K562 (cell line): ENCODE measurements at regions of chr1 and their contacts with region 1.

Region 1: GRCh38 chr1:234309598-234310459 is 63.4 kb upstream of the COA6 start:
- DNase-seq: peak; percentile 80 to 88 (median 84)
- ATAC-seq: peak; percentile 96
- H3K4me3 ChIP-seq: no peak overlapping the region
- H3K27ac ChIP-seq: no peak overlapping the region
- H3K4me1 ChIP-seq: peaks cover 2 to 3% of the 10 kb centered on the region in 2 experiments; a peak in 2 of 5 replicates
- H3K27me3 ChIP-seq: peaks cover 33 to 52% of the 10 kb centered on the region in 2 experiments
- CTCF ChIP-seq: peak; percentile 90 to 97 (median 95)
- EP300 ChIP-seq: no peak
- POLR2A ChIP-seq: no peak
- RAD21 ChIP-seq: peak; percentile 74 to 84

Region 2: GRCh38 chr1:233304489-233305102 is 1005.2 kb before region 1 on chr1:
- CTCF ChIA-PET with region 1: interaction called, 3 read pairs
- POLR2A ChIA-PET with region 1: no interaction called
- in situ Hi-C with region 1: no loop called
- intact Hi-C with region 1: loop called (anchors 10 kb)
- DNase-seq: peak; percentile 20 to 29 (median 26)
- ATAC-seq: peak; percentile 69
- H3K4me3 ChIP-seq: no peak overlapping the region
- H3K27ac ChIP-seq: no peak overlapping the region
- H3K4me1 ChIP-seq: no peaks in the 10 kb centered on the region
- H3K27me3 ChIP-seq: no peaks in the 10 kb centered on the region
- CTCF ChIP-seq: peak; percentile 45 to 82 (median 68); a peak in 5 of 6 replicates
- EP300 ChIP-seq: no peak
- POLR2A ChIP-seq: no peak
- RAD21 ChIP-seq: peak; percentile 74 to 85

Region 3: GRCh38 chr1:233394860-233395717 is 914.7 kb before region 1 on chr1:
- CTCF ChIA-PET with region 1: interaction called, 4 read pairs
- POLR2A ChIA-PET with region 1: no interaction called
- in situ Hi-C with region 1: no loop called
- intact Hi-C with region 1: loop called (anchors 10 kb)
- DNase-seq: peak; percentile 47 to 65 (median 52)
- ATAC-seq: peak; percentile 98
- H3K4me3 ChIP-seq: no peak overlapping the region
- H3K27ac ChIP-seq: no peak overlapping the region
- H3K4me1 ChIP-seq: no peaks in the 10 kb centered on the region; a peak in 1 of 5 replicates
- H3K27me3 ChIP-seq: no peaks in the 10 kb centered on the region
- CTCF ChIP-seq: peak; percentile 80 to 91 (median 83)
- EP300 ChIP-seq: no peak
- POLR2A ChIP-seq: no peak
- RAD21 ChIP-seq: peak; percentile 94 to 95

Region 4: DNA sequence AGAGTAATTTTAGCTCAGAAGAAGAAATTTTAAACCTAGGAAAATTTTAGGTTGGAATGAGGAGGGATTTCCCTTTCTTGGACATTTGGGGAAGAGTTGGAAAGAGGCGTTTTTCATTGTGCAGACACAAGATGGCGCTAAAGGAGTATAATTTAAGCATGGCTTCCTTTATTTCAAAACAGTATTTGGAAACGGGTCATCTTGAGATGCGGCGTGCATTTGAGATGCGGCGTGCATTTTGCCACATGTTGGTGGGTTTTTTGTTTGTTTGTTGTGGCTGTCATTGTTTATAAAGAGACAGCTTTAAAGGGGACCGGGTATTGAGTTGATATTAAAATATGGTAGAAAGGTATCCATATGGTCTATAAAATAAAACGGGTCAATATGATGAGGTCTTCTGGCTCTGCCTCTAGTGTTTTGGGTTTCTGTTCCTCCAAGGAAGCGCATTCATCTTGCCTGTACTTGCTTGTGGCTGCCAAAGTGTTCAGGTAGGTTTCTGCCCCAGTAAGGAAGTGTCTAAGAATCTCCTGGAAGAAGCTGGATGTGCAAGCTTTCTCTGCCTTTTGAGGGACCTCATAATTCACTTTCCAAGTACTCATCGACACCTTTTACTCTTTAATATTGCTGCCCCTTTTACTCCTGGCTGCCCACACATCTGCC is 195.1 kb before region 1 on chr1:
- CTCF ChIA-PET with region 1: interaction called, 18 read pairs
- POLR2A ChIA-PET with region 1: interaction called, 3 read pairs
- in situ Hi-C with region 1: no loop called
- intact Hi-C with region 1: loop called (anchors 1 kb)
- DNase-seq: peak; percentile 35 to 57 (median 41)
- ATAC-seq: peak; percentile 76
- H3K4me3 ChIP-seq: no peak overlapping the region
- H3K27ac ChIP-seq: no peak overlapping the region
- H3K4me1 ChIP-seq: 0 out of 5 replicates have a peak, but pooled peaks cover 0 to 3% of the 10 kb centered on the region in 2 experiments
- H3K27me3 ChIP-seq: peaks cover 7 to 22% of the 10 kb centered on the region in 2 experiments; a peak in 4 of 5 replicates
- CTCF ChIP-seq: peak; percentile 59 to 86 (median 75)
- EP300 ChIP-seq: no peak
- POLR2A ChIP-seq: no peak
- RAD21 ChIP-seq: peak; percentile 65 to 73

Region 5: GRCh38 chr1:234125283-234125682 is 184.5 kb before region 1 on chr1:
- CTCF ChIA-PET with region 1: no interaction called
- POLR2A ChIA-PET with region 1: interaction called, 3 read pairs
- in situ Hi-C with region 1: no loop called
- intact Hi-C with region 1: loop called (anchors 1 kb)
- DNase-seq: peak; percentile 45 to 71 (median 52)
- ATAC-seq: peak; percentile 99
- H3K4me3 ChIP-seq: no peak overlapping the region
- H3K27ac ChIP-seq: no peak overlapping the region
- H3K4me1 ChIP-seq: no peaks in the 10 kb centered on the region
- H3K27me3 ChIP-seq: peaks cover 4 to 23% of the 10 kb centered on the region in 2 experiments
- CTCF ChIP-seq: peak; percentile 72 to 82 (median 73)
- EP300 ChIP-seq: no peak
- POLR2A ChIP-seq: no peak
- RAD21 ChIP-seq: peak; percentile 44 to 78

Region 6: DNA sequence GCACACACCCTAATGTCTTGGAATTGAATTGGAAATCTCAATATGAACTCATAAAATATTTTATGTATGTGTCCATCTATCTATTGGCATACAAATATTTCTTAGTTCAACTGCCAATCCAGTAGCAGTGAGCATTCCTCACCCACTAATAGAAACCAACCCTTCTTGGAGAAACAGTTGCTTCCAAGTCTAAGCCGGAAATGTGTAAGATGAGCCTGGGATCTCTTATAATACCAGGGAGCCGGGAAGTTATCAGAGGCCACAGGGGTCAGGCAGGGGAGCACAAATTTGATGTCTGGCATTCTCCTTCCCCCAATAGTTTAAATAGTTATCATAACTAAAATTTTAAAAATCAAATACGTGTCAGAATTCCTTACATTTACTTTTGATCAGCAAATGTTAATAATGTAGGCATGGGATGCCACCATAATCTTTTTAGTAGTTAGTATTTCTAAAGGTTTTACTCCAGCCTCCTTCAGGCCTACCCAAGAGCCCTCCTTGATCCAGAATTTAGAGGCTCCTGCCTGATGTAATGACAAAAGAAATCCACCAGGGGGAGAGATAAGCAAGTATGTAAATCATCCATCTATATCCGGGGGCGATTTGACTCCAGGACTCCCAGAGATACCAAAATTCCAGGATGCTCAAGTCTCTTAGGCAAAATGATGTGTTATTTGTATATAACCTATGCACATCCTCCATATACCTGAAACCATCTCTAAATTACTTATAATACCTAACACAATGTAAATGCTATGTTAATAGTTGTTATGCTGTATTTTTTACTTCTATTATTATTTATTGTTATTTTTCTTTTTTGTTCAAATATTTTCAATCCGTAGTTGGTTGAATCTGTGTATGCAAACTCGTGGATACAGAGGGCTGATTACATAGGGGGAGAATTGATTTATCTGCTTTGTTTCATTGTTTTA is 155.2 kb before region 1 on chr1:
- CTCF ChIA-PET with region 1: interaction called, 12 read pairs
- POLR2A ChIA-PET with region 1: no interaction called
- in situ Hi-C with region 1: no loop called
- intact Hi-C with region 1: loop called (anchors 1 kb)
- DNase-seq: peak; percentile 68 to 72 (median 68)
- ATAC-seq: peak; percentile 95
- H3K4me3 ChIP-seq: no peak overlapping the region
- H3K27ac ChIP-seq: no peak overlapping the region
- H3K4me1 ChIP-seq: no peaks in the 10 kb centered on the region
- H3K27me3 ChIP-seq: no peaks in the 10 kb centered on the region
- CTCF ChIP-seq: peak; percentile 64 to 80 (median 77)
- EP300 ChIP-seq: no peak
- POLR2A ChIP-seq: no peak
- RAD21 ChIP-seq: peak; percentile 64 to 78

Region 7: GRCh38 chr1:234212764-234213657 is 96.8 kb before region 1 on chr1:
- CTCF ChIA-PET with region 1: no interaction called
- POLR2A ChIA-PET with region 1: no interaction called
- in situ Hi-C with region 1: no loop called
- intact Hi-C with region 1: loop called (anchors 10 kb)
- DNase-seq: peak; percentile 45 to 70 (median 64)
- ATAC-seq: peak; percentile 90
- H3K4me3 ChIP-seq: no peak overlapping the region
- H3K27ac ChIP-seq: no peak overlapping the region
- H3K4me1 ChIP-seq: peaks cover 0 to 13% of the 10 kb centered on the region in 2 experiments; a peak in 1 of 5 replicates
- H3K27me3 ChIP-seq: peaks cover 13 to 35% of the 10 kb centered on the region in 2 experiments; a peak in 4 of 5 replicates
- CTCF ChIP-seq: peak; percentile 58 to 69 (median 59); a peak in 4 of 6 replicates
- EP300 ChIP-seq: no peak
- POLR2A ChIP-seq: no peak
- RAD21 ChIP-seq: peak in 1 of 2 experiments; percentile 44; a peak in 1 of 4 replicates